ENCODE measurements at regions of chr2 and their contacts with region 1.

Region 1: DNA sequence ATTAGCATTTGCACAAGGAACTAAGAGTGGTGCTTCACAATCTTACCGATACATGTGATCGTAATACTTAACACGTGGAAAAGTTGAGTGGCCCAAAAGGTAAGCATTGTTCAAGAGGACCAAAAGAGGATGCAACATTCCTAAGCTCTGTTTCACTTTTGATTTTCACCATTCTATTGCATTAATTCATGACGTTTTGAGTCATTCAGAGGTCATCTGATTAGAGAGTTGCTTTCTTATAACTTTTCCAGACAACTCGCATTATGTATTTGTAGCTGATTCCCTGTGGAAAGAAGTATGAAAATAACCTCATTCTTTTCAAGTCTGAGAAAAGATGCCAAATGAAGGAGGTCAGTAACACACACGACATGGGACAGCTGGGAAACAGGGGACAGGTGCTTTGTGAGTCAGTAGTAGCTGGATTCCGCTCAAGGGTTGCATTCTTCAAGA is 344.4 kb downstream of the RND3 start:
- DNase-seq: peak; percentile 81
- H3K4me3 ChIP-seq: no peak overlapping the region
- H3K27ac ChIP-seq: peak overlapping the region; percentile 97
- H3K4me1 ChIP-seq: peaks cover 27% of the 10 kb centered on the region
- H3K27me3 ChIP-seq: no peaks in the 10 kb centered on the region
- CTCF ChIP-seq: no peak

Region 2: GRCh38 chr2:149885468-149885867 is 257.6 kb before region 1 on chr2:
- CTCF ChIA-PET with region 1: no interaction called
- dilution Hi-C with region 1: no loop called
- in situ Hi-C with region 1: no loop called
- intact Hi-C with region 1: loop called (anchors 10 kb)
- DNase-seq: peak; percentile 65
- H3K4me3 ChIP-seq: no peak overlapping the region
- H3K27ac ChIP-seq: no peak overlapping the region
- H3K4me1 ChIP-seq: peaks cover 16% of the 10 kb centered on the region
- H3K27me3 ChIP-seq: peaks cover 1% of the 10 kb centered on the region
- CTCF ChIP-seq: no peak

Region 3: GRCh38 chr2:150076281-150076680 is 66.8 kb before region 1 on chr2:
- CTCF ChIA-PET with region 1: no interaction called
- dilution Hi-C with region 1: no loop called
- in situ Hi-C with region 1: no loop called
- intact Hi-C with region 1: loop called (anchors 5 kb)
- DNase-seq: peak; percentile 78
- H3K4me3 ChIP-seq: no peak overlapping the region
- H3K27ac ChIP-seq: peak overlapping the region; percentile 62
- H3K4me1 ChIP-seq: peaks cover 6% of the 10 kb centered on the region
- H3K27me3 ChIP-seq: no peaks in the 10 kb centered on the region
- CTCF ChIP-seq: no peak

Region 4: DNA sequence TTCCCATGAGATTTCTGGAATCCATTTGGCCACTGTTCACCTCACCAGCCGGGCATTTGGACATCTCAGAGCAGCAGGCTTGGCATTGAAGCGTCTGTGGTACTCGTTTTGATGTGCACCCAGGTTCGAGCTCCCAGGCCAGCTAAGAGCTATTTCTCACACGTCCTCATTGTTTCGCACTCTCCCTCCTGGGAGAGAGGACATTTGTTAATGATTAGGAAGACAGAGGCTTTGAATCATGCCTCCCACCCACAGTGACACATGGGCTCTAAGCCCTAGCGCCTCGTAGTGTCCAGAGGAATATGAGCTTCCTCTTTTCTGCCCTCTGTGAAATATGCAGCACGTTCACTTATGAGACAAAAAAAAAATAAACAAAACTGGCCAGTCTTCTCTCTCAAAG is 17.4 kb before region 1 on chr2:
- CTCF ChIA-PET with region 1: no interaction called
- dilution Hi-C with region 1: no loop called
- in situ Hi-C with region 1: no loop called
- intact Hi-C with region 1: loop called (anchors 2 kb)
- DNase-seq: peak; percentile 30
- H3K4me3 ChIP-seq: no peak overlapping the region
- H3K27ac ChIP-seq: peak overlapping the region; percentile 91
- H3K4me1 ChIP-seq: peaks cover 28% of the 10 kb centered on the region
- H3K27me3 ChIP-seq: no peaks in the 10 kb centered on the region
- CTCF ChIP-seq: no peak

Region 5: GRCh38 chr2:150271952-150272802 is 129.1 kb after region 1 on chr2:
- CTCF ChIA-PET with region 1: no interaction called
- dilution Hi-C with region 1: no loop called
- in situ Hi-C with region 1: no loop called
- intact Hi-C with region 1: loop called (anchors 2 kb)
- DNase-seq: peak; percentile 91
- H3K4me3 ChIP-seq: no peak overlapping the region
- H3K27ac ChIP-seq: peak overlapping the region; percentile 71
- H3K4me1 ChIP-seq: peaks cover 31% of the 10 kb centered on the region
- H3K27me3 ChIP-seq: no peaks in the 10 kb centered on the region
- CTCF ChIP-seq: no peak

Region 6: DNA sequence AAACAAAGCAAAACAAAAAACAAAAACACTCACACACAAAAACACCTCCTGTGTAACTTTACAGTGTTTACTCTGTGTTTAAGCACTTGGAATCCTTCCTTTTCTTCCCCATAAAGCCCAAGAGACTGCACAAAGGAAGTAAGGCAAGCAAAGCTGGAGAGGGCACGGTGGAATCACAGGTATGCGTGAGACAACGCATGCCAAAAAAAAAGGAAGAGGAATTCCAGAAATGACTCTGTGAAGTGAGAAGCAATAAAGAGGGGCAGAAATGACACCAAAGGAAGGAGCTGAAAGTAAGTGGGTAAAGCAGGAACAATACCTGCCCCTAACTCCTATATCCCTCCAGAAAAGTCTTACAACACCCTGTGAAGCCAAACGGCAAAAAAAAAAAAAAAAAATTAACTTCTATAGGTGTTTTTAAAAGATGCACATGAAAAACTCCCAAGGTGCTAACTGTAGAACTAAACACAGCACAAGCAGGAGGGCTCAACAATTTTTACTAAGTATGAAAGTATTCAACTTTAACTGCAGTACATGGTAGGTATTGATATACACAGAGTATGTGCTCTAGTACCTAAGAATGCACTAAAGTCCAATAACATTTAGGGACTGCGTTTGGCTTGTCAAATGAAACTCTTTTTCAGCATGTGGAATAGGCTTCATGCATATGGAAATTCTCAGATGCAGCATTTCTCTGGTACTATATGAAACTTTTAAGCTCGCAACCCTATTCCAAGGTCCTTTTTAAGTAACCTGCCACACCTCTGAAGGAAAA is 335.3 kb after region 1 on chr2:
- CTCF ChIA-PET with region 1: no interaction called
- dilution Hi-C with region 1: no loop called
- in situ Hi-C with region 1: loop called in 1 of 2 experiments (anchors 25 kb)
- intact Hi-C with region 1: loop called (anchors 1 kb)
- DNase-seq: peak; percentile 54
- H3K4me3 ChIP-seq: peak overlapping the region; percentile 3 to 30 (median 21)
- H3K27ac ChIP-seq: peak overlapping the region; percentile 100
- H3K4me1 ChIP-seq: peaks cover 88% of the 10 kb centered on the region
- H3K27me3 ChIP-seq: no peaks in the 10 kb centered on the region
- CTCF ChIP-seq: no peak

Measured in mammary epithelial cell (primary cell).